ENCODE measurements at regions of chr14 and their contacts with region 1.

Region 1: GRCh38 chr14:73644531-73645247 is at the start of gene DNAL1:
- DNase-seq: peak; percentile 86 to 97 (median 93)

Region 2: DNA sequence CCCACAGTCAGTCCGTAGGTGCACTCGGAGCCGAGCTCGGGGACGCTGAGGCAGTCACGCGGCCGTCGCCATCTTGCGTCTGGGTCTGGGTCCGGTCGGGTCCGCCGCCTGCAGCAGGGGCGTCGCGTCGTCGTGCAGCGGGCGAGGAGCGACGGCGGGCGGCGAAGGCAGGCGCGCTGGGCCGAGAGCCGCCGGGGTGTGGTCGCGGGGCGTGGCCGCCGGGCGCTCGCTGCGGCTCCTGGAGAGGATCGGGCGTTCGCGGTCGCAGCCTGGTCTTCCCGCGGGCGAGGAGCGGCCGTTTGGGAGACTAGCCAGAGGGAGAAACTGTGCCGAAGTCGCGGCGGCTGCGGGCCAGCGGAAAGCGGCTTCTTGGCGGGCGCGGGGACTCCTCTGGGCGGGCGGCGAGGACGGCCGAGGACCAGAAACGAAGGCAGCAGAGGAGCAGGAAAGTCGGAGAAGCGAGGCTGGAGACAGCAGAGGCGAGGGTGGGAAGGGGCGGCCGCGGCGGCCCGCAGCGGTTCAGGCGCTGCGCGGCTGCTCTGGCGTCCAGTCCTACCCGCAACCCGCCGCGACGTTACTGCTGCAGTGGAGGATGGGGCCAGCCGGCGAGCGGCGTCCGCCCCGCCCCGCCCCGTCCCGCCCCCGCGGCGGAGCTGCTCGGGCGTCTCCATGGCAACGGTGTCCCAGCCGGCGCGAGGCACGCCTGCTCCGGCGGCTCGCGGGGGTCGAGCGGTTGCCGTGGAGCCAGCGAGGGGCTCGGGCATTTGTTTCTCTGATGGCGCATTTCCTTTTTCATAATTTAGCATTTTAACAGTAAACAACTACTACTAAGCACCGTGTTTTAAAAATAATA is 69.3 kb after region 1 on chr14 and contains the start of gene PNMA1:
- intact Hi-C with region 1: loop called (anchors 2 kb)
- DNase-seq: peak; percentile 78 to 98 (median 94)